ENCODE measurements at regions of chr12 and their contacts with region 1.

Region 1: DNA sequence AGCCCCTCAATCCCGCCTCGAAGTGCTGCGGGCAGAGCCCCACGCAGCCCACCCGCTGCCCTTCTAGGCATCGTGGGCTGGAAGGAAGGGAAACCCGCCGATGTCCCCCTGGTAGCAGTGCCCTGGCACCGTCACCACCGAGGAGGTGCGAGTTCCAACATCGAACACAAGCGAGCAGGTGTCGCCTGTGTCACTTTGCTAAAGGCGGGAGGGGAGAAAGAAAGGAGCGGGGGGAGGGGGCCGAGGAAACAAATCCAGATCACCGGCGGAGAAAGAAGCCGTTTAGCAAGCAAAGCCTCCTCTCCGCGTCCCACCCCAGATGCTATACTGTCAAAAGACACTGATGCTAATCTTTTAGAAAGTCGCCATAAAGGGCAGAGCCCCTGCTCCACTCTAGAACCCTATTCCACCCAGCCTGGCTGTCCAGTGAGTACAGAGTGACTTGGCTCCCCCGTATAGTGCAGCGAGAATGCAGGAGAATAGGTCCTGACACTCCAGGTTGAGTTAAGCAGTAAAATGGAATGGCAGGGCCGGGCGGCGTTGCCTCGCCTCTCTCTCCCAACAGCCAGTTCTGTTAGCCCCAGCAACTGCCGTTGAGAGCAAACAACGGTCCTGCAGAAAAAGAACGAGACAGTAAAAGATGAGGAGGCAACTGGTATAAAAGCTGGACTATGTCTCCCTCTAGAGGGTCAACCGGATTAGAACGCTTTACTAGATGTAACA is 67.9 kb upstream of the USP15 start:
- DNase-seq: peak; percentile 61
- ATAC-seq: peak; percentile 86
- H3K4me3 Mint-ChIP-seq: peak overlapping the region; percentile 74
- H3K27ac Mint-ChIP-seq: no peak overlapping the region
- H3K4me1 Mint-ChIP-seq: peaks cover 20% of the 10 kb centered on the region
- H3K27me3 Mint-ChIP-seq: peaks cover 38% of the 10 kb centered on the region
- CTCF ChIP-seq: peak; percentile 78

Region 2: DNA sequence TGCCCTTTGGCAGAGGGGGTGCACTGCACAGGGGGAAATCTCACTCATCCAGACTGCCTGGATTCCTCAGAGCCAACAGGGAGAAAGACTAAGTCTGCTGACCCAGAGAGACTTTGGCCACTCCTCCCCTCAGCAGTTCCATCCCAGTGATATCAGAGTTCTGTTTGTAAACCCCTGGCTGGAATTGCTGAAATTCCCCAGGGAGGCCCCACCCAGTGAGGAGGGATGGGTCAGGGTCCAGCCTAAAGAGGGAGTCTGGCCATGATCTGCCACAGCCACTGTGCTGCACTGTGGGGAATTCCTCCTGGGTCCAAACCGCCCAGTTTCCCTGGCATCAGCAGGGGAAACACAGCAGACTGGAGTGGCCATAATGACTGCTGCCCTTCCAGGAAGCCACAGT is 13.0 kb after region 1 on chr12:
- CTCF ChIA-PET with region 1: interaction called, 12 read pairs
- POLR2A ChIA-PET with region 1: no interaction called
- intact Hi-C with region 1: no loop called
- DNase-seq: no peak
- ATAC-seq: no peak
- H3K4me3 Mint-ChIP-seq: no peak overlapping the region
- H3K27ac Mint-ChIP-seq: no peak overlapping the region
- H3K4me1 Mint-ChIP-seq: no peaks in the 10 kb centered on the region
- H3K27me3 Mint-ChIP-seq: peaks cover 2% of the 10 kb centered on the region
- CTCF ChIP-seq: no peak

Region 3: DNA sequence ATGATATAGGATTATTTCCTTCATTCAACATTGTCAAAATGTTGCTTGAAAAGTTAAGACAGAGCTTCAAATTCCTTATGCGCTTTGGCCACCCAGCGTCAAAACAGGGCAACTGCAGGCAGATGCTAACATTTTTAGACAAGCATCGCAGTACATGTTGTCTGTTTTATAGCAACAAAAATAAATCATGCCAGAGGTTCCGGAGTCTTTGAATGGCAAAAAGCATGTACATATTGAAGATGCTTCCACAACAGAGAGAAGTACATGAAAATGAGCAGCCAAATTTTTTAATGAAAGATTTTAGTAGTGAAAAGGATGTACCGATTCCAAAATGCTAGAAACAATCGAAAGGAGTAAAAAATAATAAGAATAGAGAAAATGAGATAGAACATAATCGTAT is 18.1 kb after region 1 on chr12:
- CTCF ChIA-PET with region 1: interaction called, 12 read pairs
- POLR2A ChIA-PET with region 1: no interaction called
- intact Hi-C with region 1: no loop called
- DNase-seq: peak; percentile 63
- ATAC-seq: peak; percentile 84
- H3K4me3 Mint-ChIP-seq: no peak overlapping the region
- H3K27ac Mint-ChIP-seq: no peak overlapping the region
- H3K4me1 Mint-ChIP-seq: peaks cover 8% of the 10 kb centered on the region
- H3K27me3 Mint-ChIP-seq: no peaks in the 10 kb centered on the region
- CTCF ChIP-seq: peak; percentile 92

Region 4: GRCh38 chr12:62291864-62292760 is 99.8 kb after region 1 on chr12:
- CTCF ChIA-PET with region 1: no interaction called
- POLR2A ChIA-PET with region 1: no interaction called
- intact Hi-C with region 1: no loop called
- DNase-seq: peak; percentile 70
- ATAC-seq: peak; percentile 92
- H3K4me3 Mint-ChIP-seq: no peak overlapping the region
- H3K27ac Mint-ChIP-seq: peak overlapping the region; percentile 81
- H3K4me1 Mint-ChIP-seq: peaks cover 81% of the 10 kb centered on the region
- H3K27me3 Mint-ChIP-seq: no peaks in the 10 kb centered on the region
- CTCF ChIP-seq: no peak